Activated CD4-positive, alpha-beta T cell treated with anti-CD3 and anti-CD28 coated beads for 36 hours (primary cell): ENCODE measurements at regions of chr3 and their contacts with region 1.

Region 1: GRCh38 chr3:18847583-18848197 is 300.6 kb upstream of the KCNH8 start:
- DNase-seq: no peak
- ATAC-seq: peak; percentile 57
- H3K4me3 Mint-ChIP-seq: no peak overlapping the region
- H3K27ac Mint-ChIP-seq: no peak overlapping the region
- H3K4me1 Mint-ChIP-seq: peaks cover 29% of the 10 kb centered on the region
- H3K27me3 Mint-ChIP-seq: no peaks in the 10 kb centered on the region

Region 2: GRCh38 chr3:18149386-18149785 is 698.3 kb before region 1 on chr3:
- CTCF ChIA-PET with region 1: no interaction called
- POLR2A ChIA-PET with region 1: no interaction called
- intact Hi-C with region 1: no loop called
- DNase-seq: no peak
- ATAC-seq: no peak
- H3K4me3 Mint-ChIP-seq: no peak overlapping the region
- H3K27ac Mint-ChIP-seq: no peak overlapping the region
- H3K4me1 Mint-ChIP-seq: peaks cover 7% of the 10 kb centered on the region
- H3K27me3 Mint-ChIP-seq: peaks cover 2% of the 10 kb centered on the region

Region 3: GRCh38 chr3:18830087-18830486 is 17.6 kb before region 1 on chr3:
- CTCF ChIA-PET with region 1: interaction called, 13 read pairs
- POLR2A ChIA-PET with region 1: no interaction called
- intact Hi-C with region 1: no loop called
- DNase-seq: peak; percentile 39
- ATAC-seq: peak; percentile 75
- H3K4me3 Mint-ChIP-seq: no peak overlapping the region
- H3K27ac Mint-ChIP-seq: no peak overlapping the region
- H3K4me1 Mint-ChIP-seq: peaks cover 30% of the 10 kb centered on the region
- H3K27me3 Mint-ChIP-seq: no peaks in the 10 kb centered on the region

Region 4: GRCh38 chr3:18864933-18865731 is 17.4 kb after region 1 on chr3:
- CTCF ChIA-PET with region 1: interaction called, 25 read pairs
- POLR2A ChIA-PET with region 1: no interaction called
- intact Hi-C with region 1: loop called in 1 of 2 experiments (anchors 2 kb)
- DNase-seq: no peak
- ATAC-seq: no peak
- H3K4me3 Mint-ChIP-seq: no peak overlapping the region
- H3K27ac Mint-ChIP-seq: no peak overlapping the region
- H3K4me1 Mint-ChIP-seq: peaks cover 31% of the 10 kb centered on the region
- H3K27me3 Mint-ChIP-seq: peaks cover 2% of the 10 kb centered on the region

Region 5: DNA sequence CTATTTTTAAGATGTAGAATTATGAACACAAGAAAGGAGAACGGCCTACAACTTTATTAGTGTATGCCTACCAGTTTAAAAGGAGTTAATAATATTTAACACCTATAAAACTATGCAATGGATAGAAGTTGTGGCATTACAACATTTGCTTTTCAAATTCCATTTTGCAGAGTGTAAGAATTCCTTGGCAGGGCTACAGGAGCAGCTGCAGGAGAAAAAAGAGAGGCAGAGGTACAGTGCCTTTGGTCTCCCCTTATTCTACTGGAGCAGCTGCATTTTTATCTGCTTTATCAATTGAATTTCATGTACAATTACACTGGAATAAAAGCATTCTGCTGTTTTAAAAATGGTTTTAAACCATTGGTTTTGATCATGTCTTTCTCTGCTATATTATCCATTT is 154.9 kb after region 1 on chr3:
- CTCF ChIA-PET with region 1: no interaction called
- POLR2A ChIA-PET with region 1: no interaction called
- intact Hi-C with region 1: no loop called
- DNase-seq: no peak
- ATAC-seq: no peak
- H3K4me3 Mint-ChIP-seq: no peak overlapping the region
- H3K27ac Mint-ChIP-seq: no peak overlapping the region
- H3K4me1 Mint-ChIP-seq: no peaks in the 10 kb centered on the region
- H3K27me3 Mint-ChIP-seq: no peaks in the 10 kb centered on the region